Activated CD4-positive, alpha-beta T cell treated with anti-CD3 and anti-CD28 coated beads, Interleukin-2, amount 10 ng/mL, durations not matched to agents 7 days and 5 days (primary cell): ENCODE measurements at regions of chr12 and their contacts with region 1.

Region 1: DNA sequence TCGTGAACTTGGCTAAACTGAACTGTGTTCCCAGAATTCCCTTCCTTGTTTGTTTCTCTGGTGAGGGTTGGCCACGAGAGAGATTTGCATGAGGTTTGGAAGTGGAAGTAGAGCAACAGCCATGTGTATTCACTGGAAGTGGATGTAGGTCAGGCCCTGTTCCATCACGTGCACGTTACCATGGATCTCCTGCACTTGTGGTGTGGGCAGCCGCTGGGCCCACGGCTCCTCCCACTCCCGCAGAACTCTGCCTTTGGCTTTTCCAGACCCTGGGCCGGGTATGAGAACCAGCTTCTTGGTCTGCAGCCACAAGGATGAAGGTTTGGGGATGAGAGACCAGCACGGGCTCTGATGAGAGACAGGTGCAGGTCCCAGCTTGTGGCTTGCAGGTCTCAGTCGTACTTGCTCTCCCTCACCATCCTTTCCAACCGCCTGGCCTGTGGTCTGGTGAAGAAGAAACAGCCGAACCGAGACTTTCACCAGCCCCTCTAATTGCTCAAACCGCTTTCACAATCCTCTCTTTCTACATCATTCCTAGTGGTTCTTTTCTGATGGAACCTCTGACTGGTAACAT is 94.9 kb downstream of the DUSP16 start:
- DNase-seq: peak; percentile 37
- H3K4me3 Mint-ChIP-seq: no peak overlapping the region
- H3K27ac Mint-ChIP-seq: peak overlapping the region; percentile 85
- H3K4me1 Mint-ChIP-seq: peaks cover 70% of the 10 kb centered on the region
- H3K27me3 Mint-ChIP-seq: no peaks in the 10 kb centered on the region

Region 2: DNA sequence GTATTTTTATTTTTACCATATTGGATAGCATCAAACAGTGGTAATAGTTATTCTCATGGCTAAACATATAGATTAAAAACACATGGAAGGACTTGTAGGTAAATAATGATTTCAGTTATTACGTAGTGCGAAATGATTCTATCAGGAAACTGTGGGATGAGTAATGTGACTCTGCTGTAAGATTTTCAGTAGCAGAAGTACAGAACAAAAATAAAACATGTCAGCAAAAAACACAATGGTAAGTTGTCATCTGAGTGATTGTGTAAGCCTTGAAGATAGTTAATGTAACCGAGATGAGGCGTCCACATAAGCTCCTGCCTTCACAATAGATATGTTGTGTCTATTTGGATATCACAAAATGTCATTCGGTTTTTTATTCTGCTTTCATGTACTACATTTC is 11.1 kb before region 1 on chr12:
- CTCF ChIA-PET with region 1: interaction called, 14 read pairs
- POLR2A ChIA-PET with region 1: no interaction called
- DNase-seq: no peak
- H3K4me3 Mint-ChIP-seq: peak overlapping the region; percentile 6
- H3K27ac Mint-ChIP-seq: peak overlapping the region; percentile 51
- H3K4me1 Mint-ChIP-seq: peaks cover 35% of the 10 kb centered on the region
- H3K27me3 Mint-ChIP-seq: no peaks in the 10 kb centered on the region